ENCODE measurements at regions of chr21 and their contacts with region 1.

Region 1: DNA sequence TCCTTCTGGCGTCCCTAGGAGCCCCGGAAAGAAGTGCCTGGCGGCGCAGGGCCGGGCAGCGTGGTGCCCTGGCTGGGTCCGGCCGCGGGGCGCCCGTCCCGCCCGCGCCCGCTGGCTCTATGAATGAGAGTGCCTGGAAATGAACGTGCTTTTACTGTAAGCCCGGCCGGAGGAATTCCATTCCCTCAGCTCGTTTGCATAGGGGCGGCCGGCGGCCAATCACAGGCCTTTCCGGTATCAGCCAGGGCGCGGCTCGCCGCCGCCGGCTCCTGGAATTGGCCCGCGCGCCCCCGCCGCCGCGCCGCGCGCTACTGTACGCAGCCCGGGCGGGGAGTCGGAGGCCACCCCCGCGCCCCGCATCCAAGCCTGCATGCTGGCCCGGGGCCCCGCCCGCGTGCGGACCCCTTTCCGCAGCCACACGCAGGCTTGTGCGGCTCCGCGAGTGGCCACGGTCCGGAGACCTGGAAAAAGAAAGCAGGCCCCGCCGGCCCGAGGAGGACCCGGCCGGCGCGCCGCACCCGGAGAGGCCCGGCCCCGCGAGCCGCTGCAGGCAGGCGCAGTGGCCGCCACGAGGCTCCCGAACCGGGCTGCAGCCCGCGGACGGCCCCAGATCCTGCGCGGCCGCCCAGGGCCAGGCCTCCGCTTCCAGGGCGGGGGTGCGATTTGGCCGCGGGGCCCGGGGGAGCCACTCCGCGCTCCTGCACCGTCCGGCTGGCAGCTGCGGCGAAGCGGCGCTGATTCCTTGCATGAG is 160.4 kb downstream of the RUNX1 start:
- DNase-seq: peak; percentile 97
- H3K4me3 ChIP-seq: peak overlapping the region; percentile 68 to 77 (median 73)
- H3K27ac ChIP-seq: peak overlapping the region; percentile 72 to 90 (median 82)
- H3K4me1 ChIP-seq: peaks cover 30 to 55% (median 53%) of the 10 kb centered on the region in 4 donors
- H3K27me3 ChIP-seq: peaks cover 17 to 86% (median 55%) of the 10 kb centered on the region in 4 donors
- CTCF ChIP-seq: peak in 1 of 3 experiments; percentile 4
- EP300 ChIP-seq: no peak
- POLR2A ChIP-seq: peak; percentile 93

Region 2: GRCh38 chr21:34745557-34746255 is 143.0 kb before region 1 on chr21:
- intact Hi-C with region 1: loop called (anchors 5 kb)
- DNase-seq: no peak
- H3K4me3 ChIP-seq: peak overlapping the region in 1 of 4 donors; percentile 23
- H3K27ac ChIP-seq: no peak overlapping the region
- H3K4me1 ChIP-seq: peaks cover 0 to 11% (median 11%) of the 10 kb centered on the region in 4 donors
- H3K27me3 ChIP-seq: peaks cover 0 to 32% (median 0%) of the 10 kb centered on the region in 4 donors
- CTCF ChIP-seq: peak; percentile 75 to 91 (median 81)
- EP300 ChIP-seq: no peak
- POLR2A ChIP-seq: no peak

Region 3: GRCh38 chr21:35400233-35400957 is 511.7 kb after region 1 on chr21:
- intact Hi-C with region 1: loop called (anchors 5 kb)
- DNase-seq: no peak
- H3K4me3 ChIP-seq: no peak overlapping the region
- H3K27ac ChIP-seq: no peak overlapping the region
- H3K4me1 ChIP-seq: no peaks in the 10 kb centered on the region
- H3K27me3 ChIP-seq: peaks cover 0 to 14% (median 0%) of the 10 kb centered on the region in 4 donors
- CTCF ChIP-seq: peak; percentile 25 to 34 (median 32)
- EP300 ChIP-seq: no peak
- POLR2A ChIP-seq: no peak

Region 4: DNA sequence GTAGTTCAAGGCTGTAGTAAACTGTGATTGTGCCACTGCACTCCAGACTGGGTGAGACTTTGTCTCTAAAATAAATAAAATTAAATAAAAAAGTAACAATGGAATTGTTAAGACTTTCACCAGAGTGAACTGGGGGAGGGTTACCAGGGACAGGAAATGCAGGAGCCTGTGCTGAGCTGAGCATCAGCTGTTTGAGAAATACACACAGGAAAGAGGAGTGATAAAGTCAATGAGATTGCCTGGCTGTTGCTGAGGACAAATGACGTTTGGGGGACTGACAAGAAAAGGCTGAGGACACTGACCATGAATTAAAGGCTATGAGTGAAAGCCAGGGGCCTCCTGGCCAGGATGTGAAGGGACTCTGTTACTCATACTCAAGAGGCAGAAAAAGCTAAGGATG is 945.2 kb after region 1 on chr21:
- intact Hi-C with region 1: loop called (anchors 10 kb)
- DNase-seq: no peak
- H3K4me3 ChIP-seq: no peak overlapping the region
- H3K27ac ChIP-seq: no peak overlapping the region
- H3K4me1 ChIP-seq: no peaks in the 10 kb centered on the region
- H3K27me3 ChIP-seq: peaks cover 0 to 19% (median 0%) of the 10 kb centered on the region in 4 donors
- CTCF ChIP-seq: no peak
- EP300 ChIP-seq: no peak
- POLR2A ChIP-seq: no peak

Region 5: DNA sequence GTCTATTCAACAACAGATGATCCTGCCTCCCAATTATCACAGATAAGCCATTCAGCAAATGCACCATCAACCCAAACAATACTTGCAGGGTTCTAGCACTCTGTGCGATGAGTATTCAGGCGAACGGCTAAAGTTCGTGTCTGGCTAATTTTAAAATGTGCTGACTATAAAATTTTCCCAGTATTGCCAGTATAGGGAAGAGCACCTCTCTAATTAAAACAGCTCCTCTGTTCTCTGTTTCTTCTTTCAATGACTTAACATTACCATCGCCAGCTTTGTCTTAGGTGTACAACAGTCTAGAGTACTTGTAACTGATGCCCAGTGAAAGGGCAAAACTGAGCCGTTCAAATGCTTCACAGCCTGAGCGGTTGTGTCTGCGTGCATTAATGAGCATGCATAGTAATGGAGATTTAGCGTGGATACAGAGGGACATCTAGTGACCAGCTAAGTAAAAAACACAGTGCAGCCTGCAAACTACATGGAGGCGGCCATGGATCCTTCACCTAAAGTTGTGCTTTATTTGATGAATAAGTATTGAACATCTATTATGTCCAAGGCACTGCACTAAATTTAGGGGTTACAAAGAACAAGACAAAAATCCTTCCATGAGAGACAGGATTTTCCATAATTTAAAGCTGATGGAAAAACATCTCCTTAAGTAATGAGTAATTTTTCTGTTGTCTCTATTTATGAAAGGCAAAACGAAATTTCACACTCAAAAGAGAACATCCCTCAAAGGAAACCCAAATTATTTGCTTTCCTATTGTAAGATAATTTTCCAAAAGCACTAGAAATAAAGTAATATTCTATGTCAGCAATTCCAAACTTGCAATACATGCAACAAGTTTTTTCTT is 1051.6 kb after region 1 on chr21:
- intact Hi-C with region 1: loop called (anchors 5 kb)
- DNase-seq: peak; percentile 90
- H3K4me3 ChIP-seq: no peak overlapping the region
- H3K27ac ChIP-seq: no peak overlapping the region
- H3K4me1 ChIP-seq: peaks cover 0 to 5% (median 2%) of the 10 kb centered on the region in 4 donors
- H3K27me3 ChIP-seq: peaks cover 0 to 11% (median 0%) of the 10 kb centered on the region in 4 donors
- CTCF ChIP-seq: peak; percentile 54 to 62 (median 61)
- EP300 ChIP-seq: no peak
- POLR2A ChIP-seq: no peak

Region 6: DNA sequence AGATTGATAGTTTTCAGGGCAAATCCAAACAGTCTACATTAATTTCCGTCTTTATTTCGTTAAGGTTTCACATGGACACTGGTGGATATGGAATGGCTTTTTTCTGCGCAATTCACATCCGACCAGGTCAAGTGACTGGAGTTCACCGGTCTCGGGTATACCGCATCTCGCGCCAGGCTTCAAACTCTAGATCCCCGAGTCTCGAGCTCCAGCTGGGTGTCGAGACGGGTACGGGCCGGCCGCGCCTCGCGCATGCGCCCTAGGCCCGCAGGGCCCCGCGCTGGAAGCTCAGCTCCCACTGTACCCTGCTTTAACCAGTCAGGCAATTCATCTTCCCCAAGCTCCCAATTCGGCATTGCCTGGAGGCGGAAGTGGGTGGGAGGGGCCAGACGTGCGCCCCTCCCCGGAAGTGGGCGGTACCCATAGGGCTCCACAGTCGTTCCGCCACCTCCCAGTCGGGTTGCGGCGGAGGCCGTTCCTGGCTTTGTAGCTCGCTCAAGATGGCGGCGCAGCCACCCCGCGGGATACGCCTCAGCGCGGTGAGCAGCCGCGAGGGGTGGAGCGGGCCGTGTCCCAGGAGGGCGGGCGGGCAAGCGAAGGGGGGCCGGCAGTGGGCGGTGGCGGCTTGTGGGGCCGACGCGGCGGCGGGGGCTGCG is 1431.1 kb after region 1 on chr21 and contains the start of gene MORC3:
- intact Hi-C with region 1: loop called (anchors 10 kb)
- DNase-seq: peak; percentile 99
- H3K4me3 ChIP-seq: peak within 1 kb of the TSS; percentile 85 to 96 (median 89)
- H3K27ac ChIP-seq: peak within 1 kb of the TSS; percentile 94 to 99 (median 98)
- H3K4me1 ChIP-seq: peaks cover 35 to 47% (median 44%) of the 10 kb centered on the region in 4 donors
- H3K27me3 ChIP-seq: no peaks in the 10 kb centered on the region
- CTCF ChIP-seq: peak in 2 of 3 experiments; percentile 7 to 10
- EP300 ChIP-seq: no peak
- POLR2A ChIP-seq: peak; percentile 74
- total RNA-seq, gene MORC3: 32.0 to 41.9 (median 39.2) TPM

Measured in esophagus muscularis mucosa (tissue), 4 donors.